ENCODE measurements at regions of chr3 and their contacts with region 1.

Region 1: GRCh38 chr3:108171106-108171505 is 51.1 kb downstream of the IFT57 start:
- DNase-seq: no peak
- H3K4me3 ChIP-seq: no peak overlapping the region
- H3K4me3 Mint-ChIP-seq: no peak overlapping the region
- H3K27ac ChIP-seq: no peak overlapping the region
- H3K27ac Mint-ChIP-seq: no peak overlapping the region
- H3K4me1 ChIP-seq: no peaks in the 10 kb centered on the region
- H3K4me1 Mint-ChIP-seq: peaks cover 18 to 30% (median 23%) of the 10 kb centered on the region in 4 donors
- H3K27me3 ChIP-seq: no peaks in the 10 kb centered on the region
- H3K27me3 Mint-ChIP-seq: no peaks in the 10 kb centered on the region

Region 2: DNA sequence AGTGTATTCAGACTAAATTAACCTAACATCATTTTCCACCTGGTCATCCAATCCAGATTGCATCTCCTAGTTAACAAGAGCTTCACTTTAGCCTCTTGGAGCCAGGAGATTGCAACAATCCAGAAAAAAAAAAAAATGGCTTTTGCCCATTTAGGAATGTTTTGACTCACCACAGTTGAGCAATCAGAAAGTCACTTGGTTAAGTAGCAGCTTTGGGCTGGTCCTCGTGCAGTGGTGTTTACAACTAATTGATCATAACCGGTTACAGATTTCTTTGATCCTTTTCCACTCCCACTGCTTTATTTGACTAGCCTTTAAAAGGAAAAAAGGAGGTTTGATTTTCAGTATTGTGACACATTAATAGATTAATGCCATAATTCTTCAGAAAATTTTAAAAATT is 1482.6 kb before region 1 on chr3:
- CTCF ChIA-PET with region 1: no interaction called
- POLR2A ChIA-PET with region 1: no interaction called
- intact Hi-C with region 1: no loop called
- DNase-seq: no peak
- H3K4me3 ChIP-seq: no peak overlapping the region
- H3K4me3 Mint-ChIP-seq: no peak overlapping the region
- H3K27ac ChIP-seq: no peak overlapping the region
- H3K27ac Mint-ChIP-seq: no peak overlapping the region
- H3K4me1 ChIP-seq: no peaks in the 10 kb centered on the region
- H3K4me1 Mint-ChIP-seq: no peaks in the 10 kb centered on the region
- H3K27me3 ChIP-seq: no peaks in the 10 kb centered on the region
- H3K27me3 Mint-ChIP-seq: no peaks in the 10 kb centered on the region

Region 3: GRCh38 chr3:107441617-107442016 is 729.5 kb before region 1 on chr3:
- CTCF ChIA-PET with region 1: no interaction called
- POLR2A ChIA-PET with region 1: no interaction called
- intact Hi-C with region 1: no loop called
- DNase-seq: no peak
- H3K4me3 ChIP-seq: no peak overlapping the region
- H3K4me3 Mint-ChIP-seq: no peak overlapping the region
- H3K27ac ChIP-seq: no peak overlapping the region
- H3K27ac Mint-ChIP-seq: no peak overlapping the region
- H3K4me1 ChIP-seq: no peaks in the 10 kb centered on the region
- H3K4me1 Mint-ChIP-seq: no peaks in the 10 kb centered on the region
- H3K27me3 ChIP-seq: no peaks in the 10 kb centered on the region
- H3K27me3 Mint-ChIP-seq: peaks cover 0 to 2% of the 10 kb centered on the region in 2 donors

Region 4: GRCh38 chr3:108208831-108209230 is 37.7 kb after region 1 on chr3:
- CTCF ChIA-PET with region 1: no interaction called
- POLR2A ChIA-PET with region 1: no interaction called
- intact Hi-C with region 1: loop called (anchors 5 kb)
- DNase-seq: no peak
- H3K4me3 ChIP-seq: no peak overlapping the region
- H3K4me3 Mint-ChIP-seq: no peak overlapping the region
- H3K27ac ChIP-seq: no peak overlapping the region
- H3K27ac Mint-ChIP-seq: peak overlapping the region in 1 of 7 donors; percentile 1
- H3K4me1 ChIP-seq: no peaks in the 10 kb centered on the region
- H3K4me1 Mint-ChIP-seq: peaks cover 0 to 6% (median 3%) of the 10 kb centered on the region in 4 donors
- H3K27me3 ChIP-seq: no peaks in the 10 kb centered on the region
- H3K27me3 Mint-ChIP-seq: no peaks in the 10 kb centered on the region

Measured in CD4-positive, alpha-beta memory T cell (primary cell).